Spleen (tissue), 13 donors: ENCODE measurements at regions of chr7 and their contacts with region 1.

Region 1: DNA sequence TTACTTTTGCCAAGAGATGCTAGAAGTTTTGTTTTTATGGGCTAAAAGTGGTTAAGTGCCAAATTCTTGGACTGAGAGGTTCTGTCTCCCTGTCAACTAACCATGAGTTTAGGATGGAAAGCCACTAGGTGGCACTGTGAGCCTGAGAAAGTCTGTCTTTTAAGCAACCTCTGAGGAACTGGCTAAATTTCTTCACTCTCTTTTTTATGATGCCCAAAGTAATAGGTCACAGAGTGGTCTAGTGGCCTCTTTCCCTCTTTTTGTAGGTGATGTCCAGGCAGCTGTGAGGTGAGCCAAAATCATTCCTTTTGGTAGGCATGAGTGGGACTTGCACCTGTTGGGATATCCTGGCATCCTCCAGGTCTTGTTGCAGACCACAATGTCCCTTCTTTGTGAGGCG is 56.8 kb downstream of the SND1 start:
- DNase-seq: no peak
- H3K4me3 ChIP-seq: no peak overlapping the region
- H3K27ac ChIP-seq: no peak overlapping the region
- H3K4me1 ChIP-seq: peaks cover 0 to 9% (median 3%) of the 10 kb centered on the region in 6 donors
- H3K27me3 ChIP-seq: no peaks in the 10 kb centered on the region
- CTCF ChIP-seq: peak; percentile 62 to 86 (median 80)
- POLR2A ChIP-seq: no peak

Region 2: DNA sequence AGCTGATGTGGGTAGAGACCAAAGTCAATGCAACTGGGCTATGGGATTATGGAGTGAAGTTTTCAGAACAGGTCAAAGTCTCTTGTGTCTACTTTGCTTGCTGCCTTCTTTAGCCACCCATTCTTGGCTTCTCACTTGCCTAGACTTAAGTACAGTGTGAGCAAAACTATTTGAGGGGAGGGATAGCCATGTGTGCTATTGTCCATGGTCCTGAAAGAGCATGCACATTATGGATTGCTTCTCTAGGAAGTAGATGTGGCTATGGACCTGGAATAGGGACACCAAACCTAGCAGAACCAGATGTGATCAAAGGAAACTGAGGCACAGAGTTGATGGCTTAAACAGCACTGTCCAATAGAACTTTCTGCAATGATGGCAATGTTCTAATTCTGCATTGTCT is 234.3 kb before region 1 on chr7:
- intact Hi-C with region 1: no loop called
- DNase-seq: no peak
- H3K4me3 ChIP-seq: no peak overlapping the region
- H3K27ac ChIP-seq: no peak overlapping the region
- H3K4me1 ChIP-seq: no peaks in the 10 kb centered on the region
- H3K27me3 ChIP-seq: peaks cover 0 to 26% (median 0%) of the 10 kb centered on the region in 7 donors
- CTCF ChIP-seq: no peak
- POLR2A ChIP-seq: no peak

Region 3: DNA sequence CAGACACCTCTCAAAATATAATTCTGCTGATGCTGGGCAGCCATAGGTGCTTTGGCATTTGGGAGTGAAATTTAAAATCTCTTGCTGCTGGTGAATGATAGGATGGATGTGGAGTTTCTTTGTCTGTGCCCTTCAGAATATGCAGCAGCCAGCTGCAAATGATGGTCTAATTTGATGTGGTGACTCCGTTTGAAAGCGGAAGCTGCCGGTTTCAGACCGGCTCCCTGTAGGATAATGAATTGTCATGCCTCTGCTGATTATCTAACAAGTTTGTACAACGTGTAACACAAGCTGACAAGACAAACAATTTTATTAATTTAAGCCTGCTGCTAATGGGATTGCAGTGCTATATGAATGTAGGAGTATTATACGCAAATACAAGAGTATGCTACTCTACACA is 46.7 kb after region 1 on chr7:
- intact Hi-C with region 1: no loop called
- DNase-seq: no peak
- H3K4me3 ChIP-seq: no peak overlapping the region
- H3K27ac ChIP-seq: no peak overlapping the region
- H3K4me1 ChIP-seq: peaks cover 0 to 52% (median 14%) of the 10 kb centered on the region in 6 donors
- H3K27me3 ChIP-seq: no peaks in the 10 kb centered on the region
- CTCF ChIP-seq: no peak
- POLR2A ChIP-seq: no peak

Region 4: DNA sequence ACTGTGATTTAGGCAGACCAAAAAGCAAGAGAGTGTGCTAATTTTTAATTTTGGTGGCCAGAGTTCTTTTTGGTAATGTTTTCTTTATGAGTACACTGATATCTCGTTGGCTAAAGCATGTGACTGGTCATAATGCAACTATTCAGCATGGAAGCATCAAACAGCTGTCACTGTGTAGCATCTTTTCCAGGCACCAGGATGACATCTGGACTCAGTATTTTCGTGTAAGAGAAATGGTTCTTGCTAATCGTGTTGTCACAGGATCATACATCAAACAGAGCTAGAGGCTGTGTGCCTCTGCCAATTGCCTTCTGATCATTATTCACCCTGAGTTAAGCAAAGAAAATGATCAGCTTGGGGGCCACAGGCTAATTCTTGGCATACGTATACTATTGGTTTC is 62.1 kb after region 1 on chr7:
- intact Hi-C with region 1: no loop called
- DNase-seq: no peak
- H3K4me3 ChIP-seq: no peak overlapping the region
- H3K27ac ChIP-seq: no peak overlapping the region
- H3K4me1 ChIP-seq: peaks cover 0 to 20% (median 5%) of the 10 kb centered on the region in 6 donors
- H3K27me3 ChIP-seq: no peaks in the 10 kb centered on the region
- CTCF ChIP-seq: no peak
- POLR2A ChIP-seq: no peak

Region 5: DNA sequence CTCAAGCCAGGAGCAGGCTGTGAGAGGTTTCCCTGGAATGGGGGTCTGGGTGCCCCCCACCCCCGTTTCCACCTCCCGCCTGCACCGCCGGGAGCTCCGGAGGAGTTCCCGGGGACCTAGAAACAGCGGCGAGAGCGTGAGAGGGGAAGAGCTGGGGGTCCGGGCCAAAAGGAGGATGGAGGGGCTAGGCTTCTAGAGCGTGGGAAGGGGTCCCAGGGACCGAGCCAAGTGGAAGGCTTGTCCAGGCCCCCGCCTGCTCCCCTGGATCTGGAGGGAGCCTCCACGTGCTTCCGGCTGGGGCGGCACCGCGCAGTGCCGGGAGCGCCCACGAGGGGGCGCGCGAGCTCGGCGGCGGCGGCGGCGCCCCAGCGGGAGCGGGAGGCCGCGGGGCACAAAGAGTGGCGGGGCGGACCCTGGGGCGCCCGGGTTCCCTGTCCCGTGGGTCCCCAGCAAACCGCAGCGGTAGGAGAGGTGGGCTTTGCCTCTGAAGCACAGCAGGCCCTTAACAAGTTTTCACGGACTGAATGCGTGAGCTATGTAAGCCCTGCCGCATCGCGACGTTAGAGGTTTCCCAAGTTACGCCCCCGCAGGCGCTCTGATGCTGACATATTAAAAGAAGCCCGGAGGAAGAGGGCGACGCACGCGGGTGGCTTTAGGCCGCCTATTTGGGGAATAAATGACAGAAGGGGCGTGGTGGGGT is 426.9 kb after region 1 on chr7:
- intact Hi-C with region 1: loop called (anchors 10 kb)
- DNase-seq: peak; percentile 91
- H3K4me3 ChIP-seq: peak overlapping the region; percentile 30 to 75 (median 54)
- H3K27ac ChIP-seq: peak overlapping the region in 4 of 8 donors; percentile 10 to 32 (median 22)
- H3K4me1 ChIP-seq: peaks cover 8 to 31% (median 22%) of the 10 kb centered on the region in 6 donors
- H3K27me3 ChIP-seq: peaks cover 0 to 52% (median 10%) of the 10 kb centered on the region in 7 donors
- CTCF ChIP-seq: peak; percentile 1 to 98 (median 91)
- POLR2A ChIP-seq: no peak